ENCODE measurements at regions of chr4 and their contacts with region 1.

Region 1: GRCh38 chr4:6783053-6783981 is 790 bp downstream of the KIAA0232 start:
- DNase-seq: peak; percentile 94
- ATAC-seq: peak; percentile 77
- H3K4me3 Mint-ChIP-seq: peak overlapping the region; percentile 89
- H3K27ac Mint-ChIP-seq: peak overlapping the region; percentile 83
- H3K4me1 Mint-ChIP-seq: peaks cover 61% of the 10 kb centered on the region
- H3K27me3 Mint-ChIP-seq: no peaks in the 10 kb centered on the region

Region 2: GRCh38 chr4:6768539-6768905 is 14.8 kb before region 1 on chr4:
- POLR2A ChIA-PET with region 1: interaction called, 16 read pairs
- DNase-seq: no peak
- ATAC-seq: no peak
- H3K4me3 Mint-ChIP-seq: peak overlapping the region; percentile 14
- H3K27ac Mint-ChIP-seq: peak overlapping the region; percentile 50
- H3K4me1 Mint-ChIP-seq: peaks cover 19% of the 10 kb centered on the region
- H3K27me3 Mint-ChIP-seq: no peaks in the 10 kb centered on the region

Measured in activated naive CD8-positive, alpha-beta T cell treated with anti-CD3 and anti-CD28 coated beads, Interleukin-2, amount 10 ng/mL, durations not matched to agents 7 days and 5 days (primary cell).